ENCODE measurements at regions of chr4 and their contacts with region 1.

Region 1: GRCh38 chr4:75849461-75849860 is 52.8 kb downstream of the PPEF2 start:
- DNase-seq: no peak
- ATAC-seq: peak; percentile 42
- H3K4me3 ChIP-seq: no peak overlapping the region
- H3K4me3 Mint-ChIP-seq: no peak overlapping the region
- H3K27ac ChIP-seq: no peak overlapping the region
- H3K27ac Mint-ChIP-seq: peak overlapping the region in 1 of 9 donors; percentile 80
- H3K4me1 ChIP-seq: no peaks in the 10 kb centered on the region
- H3K4me1 Mint-ChIP-seq: peaks cover 0 to 19% (median 0%) of the 10 kb centered on the region in 7 donors
- H3K27me3 ChIP-seq: no peaks in the 10 kb centered on the region
- H3K27me3 Mint-ChIP-seq: peaks cover 5 to 13% (median 6%) of the 10 kb centered on the region in 5 donors

Region 2: DNA sequence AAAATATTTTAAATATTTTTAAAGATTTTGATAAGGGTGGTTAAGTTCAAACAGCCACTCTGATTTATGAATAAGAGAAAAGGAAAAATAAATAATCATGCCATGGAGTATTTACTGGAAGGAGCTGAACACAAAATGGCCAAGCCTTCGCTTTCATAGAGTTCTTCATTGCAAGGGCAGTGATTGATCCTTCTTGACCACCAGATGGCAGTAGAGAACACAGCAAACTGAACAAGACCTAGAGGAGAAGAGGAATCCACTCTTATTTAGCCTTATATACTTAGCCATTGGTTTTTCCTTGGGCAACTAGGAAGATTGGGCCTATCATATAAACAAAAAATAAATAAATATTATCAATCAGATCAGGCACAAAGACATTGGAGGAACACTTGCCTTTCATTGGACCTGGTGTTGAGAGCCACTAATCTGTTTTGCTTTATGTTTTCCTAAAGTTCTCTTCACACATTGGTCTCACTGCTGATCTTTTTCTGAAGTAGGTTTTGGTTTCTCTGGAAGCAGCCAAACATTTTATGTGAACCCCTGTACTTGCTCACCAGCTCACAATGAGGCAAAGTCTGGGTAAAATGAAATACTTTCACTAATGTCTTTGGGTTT is 974.6 kb before region 1 on chr4:
- CTCF ChIA-PET with region 1: interaction called, 5 read pairs
- POLR2A ChIA-PET with region 1: no interaction called
- intact Hi-C with region 1: loop called in 1 of 2 experiments (anchors 1 kb)
- DNase-seq: peak in 8 of 9 donors; percentile 5 to 51 (median 36)
- ATAC-seq: peak; percentile 80
- H3K4me3 ChIP-seq: no peak overlapping the region
- H3K4me3 Mint-ChIP-seq: no peak overlapping the region
- H3K27ac ChIP-seq: no peak overlapping the region
- H3K27ac Mint-ChIP-seq: no peak overlapping the region
- H3K4me1 ChIP-seq: no peaks in the 10 kb centered on the region
- H3K4me1 Mint-ChIP-seq: no peaks in the 10 kb centered on the region
- H3K27me3 ChIP-seq: no peaks in the 10 kb centered on the region
- H3K27me3 Mint-ChIP-seq: peaks cover 4 to 26% (median 19%) of the 10 kb centered on the region in 5 donors

Region 3: GRCh38 chr4:75708218-75708691 is 141.2 kb before region 1 on chr4:
- CTCF ChIA-PET with region 1: no interaction called
- POLR2A ChIA-PET with region 1: no interaction called
- intact Hi-C with region 1: loop called (anchors 1 to 5 kb)
- DNase-seq: peak in 7 of 9 donors; percentile 49 to 72 (median 52)
- ATAC-seq: peak; percentile 93
- H3K4me3 ChIP-seq: no peak overlapping the region
- H3K4me3 Mint-ChIP-seq: no peak overlapping the region
- H3K27ac ChIP-seq: no peak overlapping the region
- H3K27ac Mint-ChIP-seq: peak overlapping the region in 7 of 9 donors; percentile 19 to 81 (median 56)
- H3K4me1 ChIP-seq: no peaks in the 10 kb centered on the region
- H3K4me1 Mint-ChIP-seq: peaks cover 0 to 13% (median 5%) of the 10 kb centered on the region in 7 donors
- H3K27me3 ChIP-seq: no peaks in the 10 kb centered on the region
- H3K27me3 Mint-ChIP-seq: no peaks in the 10 kb centered on the region

Region 4: GRCh38 chr4:75869100-75869499 is 19.6 kb after region 1 on chr4:
- CTCF ChIA-PET with region 1: no interaction called
- POLR2A ChIA-PET with region 1: no interaction called
- intact Hi-C with region 1: no loop called
- DNase-seq: no peak
- ATAC-seq: no peak
- H3K4me3 ChIP-seq: no peak overlapping the region
- H3K4me3 Mint-ChIP-seq: no peak overlapping the region
- H3K27ac ChIP-seq: no peak overlapping the region
- H3K27ac Mint-ChIP-seq: no peak overlapping the region
- H3K4me1 ChIP-seq: no peaks in the 10 kb centered on the region
- H3K4me1 Mint-ChIP-seq: no peaks in the 10 kb centered on the region
- H3K27me3 ChIP-seq: no peaks in the 10 kb centered on the region
- H3K27me3 Mint-ChIP-seq: peaks cover 0 to 23% (median 0%) of the 10 kb centered on the region in 5 donors